Activated naive CD4-positive, alpha-beta T cell treated with anti-CD3 and anti-CD28 coated beads for 36 hours (primary cell): ENCODE measurements at regions of chr19 and their contacts with region 1.

Region 1: DNA sequence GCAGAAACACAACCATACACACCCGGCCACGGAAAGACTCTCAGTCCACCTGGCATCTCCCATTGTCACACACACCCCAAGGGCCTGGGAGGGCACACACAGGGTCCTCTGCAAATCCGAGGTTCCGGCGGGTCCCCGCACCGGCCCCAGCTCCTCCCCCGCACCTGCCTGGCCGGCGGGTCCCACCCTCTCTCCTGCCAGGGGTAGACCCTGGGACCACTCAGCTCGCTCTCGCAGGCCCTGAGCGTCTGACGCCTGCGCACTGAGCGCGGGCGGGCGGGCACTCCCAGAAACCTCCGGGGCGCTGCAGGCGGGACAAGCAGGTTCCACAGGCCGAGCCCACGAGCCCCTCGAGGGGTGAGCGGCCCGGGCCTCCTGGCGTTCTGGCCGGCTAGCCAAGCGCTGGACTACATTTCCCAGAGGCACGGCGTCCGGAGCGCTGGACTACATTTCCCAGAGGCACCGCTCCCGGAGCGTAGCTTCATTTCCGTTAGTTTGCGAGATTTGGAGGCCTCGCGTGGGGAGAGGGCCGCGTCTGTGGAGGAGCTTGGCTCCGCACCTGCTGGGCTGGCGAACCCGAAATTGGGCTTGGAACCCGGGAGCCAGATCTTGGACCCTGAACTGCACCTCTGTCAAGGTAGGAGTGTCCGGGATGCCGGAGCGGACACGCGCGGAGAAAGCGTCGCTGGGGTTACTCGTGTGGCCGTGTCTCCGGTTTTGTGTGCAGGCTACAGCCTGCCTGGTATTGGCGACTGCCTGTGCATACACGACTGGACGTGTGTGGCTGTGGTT is at the start of gene ZNF420:
- DNase-seq: peak; percentile 92
- H3K4me3 Mint-ChIP-seq: peak within 1 kb of the TSS; percentile 93
- H3K27ac Mint-ChIP-seq: peak within 1 kb of the TSS; percentile 89
- H3K4me1 Mint-ChIP-seq: peaks cover 21% of the 10 kb centered on the region
- H3K27me3 Mint-ChIP-seq: no peaks in the 10 kb centered on the region
- total RNA-seq, gene ZNF420: 6.4 to 7.3 TPM

Region 2: DNA sequence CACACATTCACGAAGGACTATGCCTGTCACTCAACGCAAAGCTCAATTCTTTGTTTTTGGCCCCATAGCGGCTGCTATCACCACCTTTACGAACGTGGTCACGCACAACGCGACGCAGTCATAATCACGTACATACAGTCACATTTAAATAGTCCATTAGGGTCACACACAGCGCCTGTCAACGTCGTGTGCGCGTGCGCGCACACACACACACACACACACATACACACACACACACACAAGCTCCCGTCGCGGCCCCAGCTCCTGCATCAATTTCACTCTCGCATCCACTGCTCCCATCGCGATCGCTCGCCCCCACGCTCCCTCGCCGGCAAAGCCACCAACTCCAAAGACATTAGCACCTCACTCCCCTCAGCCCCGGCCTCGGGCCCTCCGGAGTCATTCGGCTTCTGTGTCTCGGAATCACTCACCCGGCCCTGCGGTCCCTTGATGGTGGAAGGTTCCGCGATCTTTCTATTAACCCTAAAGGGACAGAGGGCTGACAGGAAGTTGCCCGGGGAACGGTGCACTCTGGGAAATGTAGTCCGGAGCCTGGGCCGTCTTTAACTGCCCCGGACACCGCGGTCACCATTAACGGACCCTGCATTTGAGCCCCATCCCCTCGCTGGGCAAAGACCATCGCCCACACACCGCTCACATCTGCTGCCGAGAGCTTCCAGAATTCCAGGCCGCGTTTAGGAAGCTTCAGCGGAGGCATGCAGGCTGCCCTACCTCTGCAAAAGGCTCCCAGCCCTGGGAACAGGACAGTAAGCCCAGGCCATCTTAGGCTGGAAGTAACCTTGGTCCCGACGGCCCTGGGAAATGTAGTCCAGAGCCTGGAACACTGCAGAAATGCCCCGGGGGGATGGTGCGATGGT is 240.0 kb before region 1 on chr19 and contains the start of gene ZNF790:
- CTCF ChIA-PET with region 1: no interaction called
- intact Hi-C with region 1: loop called (anchors 5 kb)
- DNase-seq: peak; percentile 92
- H3K4me3 Mint-ChIP-seq: no peak within 1 kb of the TSS
- H3K27ac Mint-ChIP-seq: peak within 1 kb of the TSS; percentile 54
- H3K4me1 Mint-ChIP-seq: peaks cover 7% of the 10 kb centered on the region
- H3K27me3 Mint-ChIP-seq: no peaks in the 10 kb centered on the region
- total RNA-seq, gene ZNF790: 4.9 to 5.2 TPM

Region 3: GRCh38 chr19:36915992-36916830 is 161.9 kb before region 1 on chr19 and contains the starts of genes ZNF568 and ZNF829:
- CTCF ChIA-PET with region 1: no interaction called
- intact Hi-C with region 1: loop called (anchors 2 kb)
- DNase-seq: peak; percentile 96
- H3K4me3 Mint-ChIP-seq: peak within 1 kb of the TSS; percentile 87
- H3K27ac Mint-ChIP-seq: peak within 1 kb of the TSS; percentile 91
- H3K4me1 Mint-ChIP-seq: peaks cover 17% of the 10 kb centered on the region
- H3K27me3 Mint-ChIP-seq: no peaks in the 10 kb centered on the region
- total RNA-seq, gene ZNF568: 5.3 to 6.3 TPM
- total RNA-seq, gene ZNF829: 3.5 to 3.7 TPM

Region 4: DNA sequence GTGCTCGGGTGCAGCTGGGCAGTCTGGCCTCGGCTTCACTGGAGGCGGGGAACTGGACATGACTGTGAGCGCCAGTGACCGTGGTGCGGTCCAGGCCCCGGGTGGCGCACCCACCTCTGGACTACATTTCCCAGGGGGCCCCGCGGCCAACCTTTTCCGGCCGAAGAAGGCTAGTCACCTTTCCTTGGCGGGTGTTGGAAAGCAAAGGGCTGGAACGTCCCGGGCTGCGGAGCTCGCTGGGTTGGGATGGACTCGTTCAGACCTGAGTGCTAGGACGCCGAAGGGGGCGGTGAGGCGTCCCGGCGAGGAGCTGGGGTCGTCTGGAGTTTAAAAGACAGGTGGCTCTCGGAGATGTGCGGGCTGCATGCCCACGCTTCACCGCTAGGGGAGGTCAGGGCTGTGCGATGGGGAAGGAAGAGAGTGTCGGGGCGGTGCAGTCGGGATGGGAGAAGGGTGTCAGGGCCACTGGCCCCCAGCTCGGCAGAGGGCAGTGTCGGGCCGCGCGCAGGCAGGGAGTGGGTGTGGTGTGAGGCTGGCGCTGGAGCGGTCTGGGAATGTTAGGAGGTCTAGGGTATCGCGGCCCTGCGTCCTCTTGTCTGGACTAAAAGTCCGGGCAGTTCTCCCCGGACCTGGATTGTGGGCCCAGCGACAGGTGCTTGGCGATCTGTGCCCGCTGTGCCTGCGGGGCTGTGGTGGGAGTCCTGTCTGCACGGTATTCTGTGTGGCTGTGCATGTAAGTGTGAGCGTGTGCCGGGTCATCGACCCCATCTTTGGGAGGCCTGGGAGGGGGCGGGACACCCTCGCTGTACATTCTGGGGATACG is 104.9 kb before region 1 on chr19:
- CTCF ChIA-PET with region 1: no interaction called
- intact Hi-C with region 1: loop called (anchors 2 kb)
- DNase-seq: peak; percentile 91
- H3K4me3 Mint-ChIP-seq: peak overlapping the region; percentile 92
- H3K27ac Mint-ChIP-seq: peak overlapping the region; percentile 95
- H3K4me1 Mint-ChIP-seq: peaks cover 11% of the 10 kb centered on the region
- H3K27me3 Mint-ChIP-seq: no peaks in the 10 kb centered on the region

Region 5: GRCh38 chr19:37059142-37059541 is 19.0 kb before region 1 on chr19:
- CTCF ChIA-PET with region 1: no interaction called
- intact Hi-C with region 1: no loop called
- DNase-seq: no peak
- H3K4me3 Mint-ChIP-seq: no peak overlapping the region
- H3K27ac Mint-ChIP-seq: no peak overlapping the region
- H3K4me1 Mint-ChIP-seq: no peaks in the 10 kb centered on the region
- H3K27me3 Mint-ChIP-seq: no peaks in the 10 kb centered on the region

Region 6: DNA sequence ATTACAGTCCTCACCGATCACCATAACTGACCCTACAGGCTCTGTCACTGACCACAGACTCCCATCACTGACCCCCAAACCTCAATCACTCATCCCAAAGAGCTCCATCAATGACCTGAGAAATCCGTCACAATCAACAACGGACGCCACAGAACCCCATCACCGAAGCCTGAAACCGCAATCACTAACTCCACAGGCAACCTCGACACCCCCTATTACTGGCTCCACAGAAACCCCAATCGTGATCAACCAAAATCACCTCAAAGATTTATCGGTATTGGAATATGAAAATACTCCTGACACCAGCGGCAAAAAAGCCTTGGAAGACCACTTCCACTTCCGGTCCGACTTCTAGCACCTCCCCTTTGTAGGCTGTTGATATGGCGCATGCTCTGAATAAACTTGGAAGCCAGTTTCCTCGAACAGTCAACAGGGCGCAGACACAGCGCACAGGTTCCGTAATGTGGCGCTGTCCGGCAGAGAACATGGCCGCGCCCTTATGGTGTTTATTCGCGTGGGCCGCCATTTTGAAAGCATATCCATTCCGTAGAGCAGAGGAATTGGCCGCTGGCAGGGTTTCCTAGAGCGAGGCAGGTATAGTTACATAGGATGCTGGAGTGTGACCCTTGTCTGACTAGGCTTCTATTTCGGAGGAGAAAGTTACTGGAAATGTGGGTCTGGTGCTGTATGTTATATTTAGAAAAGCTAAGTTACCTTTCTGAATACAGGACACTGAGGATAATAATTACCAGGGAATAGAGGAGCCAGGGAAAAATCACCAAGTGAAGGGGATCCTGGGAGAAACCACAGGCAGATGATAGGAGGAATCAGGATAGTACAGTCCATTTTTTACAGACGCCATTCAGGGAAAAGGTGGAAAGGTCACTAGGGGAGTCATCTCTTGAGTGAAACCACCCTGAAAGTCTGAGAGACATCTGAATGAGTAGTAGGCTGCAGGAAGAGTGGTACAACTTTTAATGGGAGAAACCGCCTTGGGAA is 94.5 kb after region 1 on chr19 and contains the start of gene ZNF585A:
- CTCF ChIA-PET with region 1: no interaction called
- intact Hi-C with region 1: loop called (anchors 2 kb)
- DNase-seq: peak; percentile 92
- H3K4me3 Mint-ChIP-seq: no peak within 1 kb of the TSS
- H3K27ac Mint-ChIP-seq: no peak within 1 kb of the TSS
- H3K4me1 Mint-ChIP-seq: no peaks in the 10 kb centered on the region
- H3K27me3 Mint-ChIP-seq: no peaks in the 10 kb centered on the region
- total RNA-seq, gene ZNF585A: 8.9 to 9.1 TPM

Region 7: GRCh38 chr19:37217855-37218591 is 139.9 kb after region 1 on chr19 and contains the start of gene ZNF383:
- CTCF ChIA-PET with region 1: no interaction called
- intact Hi-C with region 1: loop called (anchors 1 kb)
- DNase-seq: peak; percentile 87
- H3K4me3 Mint-ChIP-seq: peak within 1 kb of the TSS; percentile 88
- H3K27ac Mint-ChIP-seq: peak within 1 kb of the TSS; percentile 92
- H3K4me1 Mint-ChIP-seq: peaks cover 16% of the 10 kb centered on the region
- H3K27me3 Mint-ChIP-seq: no peaks in the 10 kb centered on the region
- total RNA-seq, gene ZNF383: 8.4 to 9.1 TPM